CD4-positive, alpha-beta memory T cell (primary cell): ENCODE measurements at regions of chr2 and their contacts with region 1.

Region 1: DNA sequence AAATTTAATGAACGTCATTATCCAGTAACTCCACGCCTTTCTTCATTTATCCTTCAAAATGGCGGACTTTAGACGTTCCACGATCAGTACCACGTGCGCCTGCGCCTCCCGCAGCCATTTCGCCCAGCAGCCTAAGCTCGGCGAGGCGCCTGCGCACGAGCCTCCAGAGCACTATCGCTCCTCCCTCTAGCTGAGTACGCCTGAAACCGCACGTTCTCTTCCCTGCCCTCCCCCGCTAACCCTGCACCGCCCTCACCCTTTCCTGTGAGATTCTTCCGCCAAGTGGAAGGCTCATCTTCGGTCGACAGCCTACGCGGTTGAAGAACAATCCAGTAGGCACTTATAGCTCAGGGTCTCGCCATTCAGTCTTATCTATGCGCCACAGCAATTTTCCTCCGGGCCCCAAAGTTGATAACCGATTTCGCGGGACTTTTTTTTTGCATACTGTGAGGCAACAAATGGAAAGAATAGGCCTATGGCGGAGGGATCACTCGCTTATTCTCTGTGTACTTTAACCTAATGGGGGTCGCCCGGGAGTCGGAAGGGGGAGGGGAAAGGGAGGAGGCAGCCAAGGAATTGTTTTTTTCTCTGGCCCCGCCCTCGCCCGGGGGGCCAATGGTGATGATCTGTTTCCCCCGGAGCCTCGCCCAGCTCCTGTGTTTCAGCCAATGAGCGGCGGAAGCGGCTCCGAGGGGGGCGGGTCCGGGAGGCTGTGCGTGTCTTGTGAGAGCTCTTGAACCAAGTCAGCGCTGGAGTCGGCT is at the start of gene KDM3A:
- DNase-seq: peak; percentile 99 to 100 (median 99)
- H3K4me3 ChIP-seq: peak within 1 kb of the TSS; percentile 94 to 95
- H3K4me3 Mint-ChIP-seq: peak within 1 kb of the TSS; percentile 95 to 99 (median 98)
- H3K27ac ChIP-seq: peak within 1 kb of the TSS; percentile 83
- H3K27ac Mint-ChIP-seq: peak within 1 kb of the TSS; percentile 98 to 100 (median 99)
- H3K4me1 ChIP-seq: peaks cover 37% of the 10 kb centered on the region
- H3K4me1 Mint-ChIP-seq: peaks cover 37 to 51% (median 45%) of the 10 kb centered on the region in 4 donors
- H3K27me3 ChIP-seq: no peaks in the 10 kb centered on the region
- H3K27me3 Mint-ChIP-seq: peaks cover 2 to 9% of the 10 kb centered on the region in 2 donors
- total RNA-seq, gene KDM3A: 158 to 164 TPM

Region 2: GRCh38 chr2:85354286-85355072 is 1086.3 kb before region 1 on chr2 and contains the starts of genes ELMOD3 and RETSAT:
- CTCF ChIA-PET with region 1: no interaction called
- POLR2A ChIA-PET with region 1: interaction called, 3 read pairs
- intact Hi-C with region 1: loop called (anchors 5 kb)
- DNase-seq: peak; percentile 98 to 99 (median 99)
- H3K4me3 ChIP-seq: peak within 1 kb of the TSS; percentile 64 to 81
- H3K4me3 Mint-ChIP-seq: peak within 1 kb of the TSS; percentile 97 to 100 (median 99)
- H3K27ac ChIP-seq: peak within 1 kb of the TSS; percentile 94
- H3K27ac Mint-ChIP-seq: peak within 1 kb of the TSS; percentile 94 to 100 (median 99)
- H3K4me1 ChIP-seq: peaks cover 44% of the 10 kb centered on the region
- H3K4me1 Mint-ChIP-seq: peaks cover 28 to 74% (median 57%) of the 10 kb centered on the region in 4 donors
- H3K27me3 ChIP-seq: no peaks in the 10 kb centered on the region
- H3K27me3 Mint-ChIP-seq: no peaks in the 10 kb centered on the region
- total RNA-seq, gene ELMOD3: 29.8 to 33.2 TPM
- total RNA-seq, gene RETSAT: 33.0 to 33.4 TPM

Region 3: GRCh38 chr2:86105252-86105968 is 335.4 kb before region 1 on chr2 and contains the start of gene POLR1A:
- CTCF ChIA-PET with region 1: no interaction called
- POLR2A ChIA-PET with region 1: interaction called, 16 read pairs
- intact Hi-C with region 1: loop called (anchors 1 kb)
- DNase-seq: peak; percentile 88 to 91 (median 90)
- H3K4me3 ChIP-seq: peak within 1 kb of the TSS; percentile 73 to 83
- H3K4me3 Mint-ChIP-seq: peak within 1 kb of the TSS; percentile 88 to 96 (median 92)
- H3K27ac ChIP-seq: peak within 1 kb of the TSS; percentile 82
- H3K27ac Mint-ChIP-seq: peak within 1 kb of the TSS; percentile 93 to 100 (median 99)
- H3K4me1 ChIP-seq: peaks cover 34% of the 10 kb centered on the region
- H3K4me1 Mint-ChIP-seq: peaks cover 47 to 79% (median 61%) of the 10 kb centered on the region in 4 donors
- H3K27me3 ChIP-seq: no peaks in the 10 kb centered on the region
- H3K27me3 Mint-ChIP-seq: no peaks in the 10 kb centered on the region
- total RNA-seq, gene POLR1A: 23.4 to 25.8 TPM

Region 4: GRCh38 chr2:86135653-86136052 is 305.2 kb before region 1 on chr2:
- CTCF ChIA-PET with region 1: no interaction called
- POLR2A ChIA-PET with region 1: no interaction called
- intact Hi-C with region 1: no loop called
- DNase-seq: no peak
- H3K4me3 ChIP-seq: no peak overlapping the region
- H3K4me3 Mint-ChIP-seq: no peak overlapping the region
- H3K27ac ChIP-seq: no peak overlapping the region
- H3K27ac Mint-ChIP-seq: peak overlapping the region in 5 of 7 donors; percentile 4 to 55 (median 24)
- H3K4me1 ChIP-seq: no peaks in the 10 kb centered on the region
- H3K4me1 Mint-ChIP-seq: peaks cover 8 to 20% (median 12%) of the 10 kb centered on the region in 4 donors
- H3K27me3 ChIP-seq: no peaks in the 10 kb centered on the region
- H3K27me3 Mint-ChIP-seq: no peaks in the 10 kb centered on the region

Region 5: DNA sequence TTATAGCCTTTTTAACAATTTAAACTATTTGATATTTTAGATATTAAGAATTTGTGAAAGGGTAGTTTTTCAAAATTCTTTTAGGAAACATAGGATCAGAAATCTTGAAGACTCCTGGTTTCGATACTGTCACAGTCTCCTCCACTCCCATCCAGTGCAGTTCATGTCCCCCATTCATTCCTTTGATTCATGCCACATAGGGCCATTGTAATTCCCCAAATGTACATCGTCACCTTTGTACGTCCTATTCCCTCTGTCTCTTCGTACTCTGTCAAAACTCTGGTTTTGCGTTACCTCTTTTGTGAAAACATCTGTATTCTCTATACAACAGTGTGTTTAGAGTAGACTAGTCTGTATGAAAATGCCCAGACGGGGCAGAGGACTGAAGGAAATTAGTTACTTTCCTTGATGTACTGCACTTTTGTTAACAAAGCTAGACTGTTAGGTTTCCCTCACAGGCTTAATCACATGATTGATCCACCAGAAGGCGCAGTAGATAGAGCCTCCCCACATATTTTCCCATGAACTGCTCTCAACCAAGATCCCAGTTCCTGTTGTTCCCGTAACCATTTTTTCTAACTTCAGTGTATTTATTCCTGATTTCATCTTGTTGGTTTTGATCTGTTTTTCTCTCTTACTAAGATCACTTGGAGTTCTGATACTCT is 239.0 kb before region 1 on chr2:
- CTCF ChIA-PET with region 1: no interaction called
- POLR2A ChIA-PET with region 1: interaction called, 21 read pairs
- intact Hi-C with region 1: no loop called
- DNase-seq: no peak
- H3K4me3 ChIP-seq: no peak overlapping the region
- H3K4me3 Mint-ChIP-seq: peak overlapping the region in 5 of 8 donors; percentile 10 to 43 (median 22)
- H3K27ac ChIP-seq: no peak overlapping the region
- H3K27ac Mint-ChIP-seq: peak overlapping the region in 4 of 7 donors; percentile 51 to 70 (median 56)
- H3K4me1 ChIP-seq: peaks cover 24% of the 10 kb centered on the region
- H3K4me1 Mint-ChIP-seq: peaks cover 27 to 49% (median 38%) of the 10 kb centered on the region in 4 donors
- H3K27me3 ChIP-seq: no peaks in the 10 kb centered on the region
- H3K27me3 Mint-ChIP-seq: no peaks in the 10 kb centered on the region

Region 6: DNA sequence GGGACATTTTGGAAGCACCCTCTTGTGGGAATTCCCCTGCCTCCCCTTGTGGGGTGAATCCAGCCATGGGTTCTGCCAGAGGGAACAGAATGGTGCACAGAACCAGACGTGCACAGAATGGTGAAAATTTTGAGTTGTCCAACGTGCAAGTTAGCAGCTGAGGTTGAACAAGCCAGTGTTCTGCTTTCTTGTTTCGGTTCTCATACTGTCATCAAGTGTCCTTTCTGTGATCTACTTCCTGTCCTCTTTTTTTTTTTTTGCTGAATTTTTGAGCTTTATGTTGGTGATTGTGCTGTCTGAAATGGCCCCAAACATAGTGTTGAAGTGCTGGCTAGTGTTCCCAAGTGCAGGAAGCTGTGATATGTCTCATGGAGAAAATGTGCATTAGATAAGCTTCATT is 81.9 kb before region 1 on chr2:
- CTCF ChIA-PET with region 1: no interaction called
- POLR2A ChIA-PET with region 1: no interaction called
- intact Hi-C with region 1: no loop called
- DNase-seq: no peak
- H3K4me3 ChIP-seq: no peak overlapping the region
- H3K4me3 Mint-ChIP-seq: no peak overlapping the region
- H3K27ac ChIP-seq: no peak overlapping the region
- H3K27ac Mint-ChIP-seq: no peak overlapping the region
- H3K4me1 ChIP-seq: no peaks in the 10 kb centered on the region
- H3K4me1 Mint-ChIP-seq: no peaks in the 10 kb centered on the region
- H3K27me3 ChIP-seq: no peaks in the 10 kb centered on the region
- H3K27me3 Mint-ChIP-seq: peaks cover 5 to 9% of the 10 kb centered on the region in 2 donors

Region 7: DNA sequence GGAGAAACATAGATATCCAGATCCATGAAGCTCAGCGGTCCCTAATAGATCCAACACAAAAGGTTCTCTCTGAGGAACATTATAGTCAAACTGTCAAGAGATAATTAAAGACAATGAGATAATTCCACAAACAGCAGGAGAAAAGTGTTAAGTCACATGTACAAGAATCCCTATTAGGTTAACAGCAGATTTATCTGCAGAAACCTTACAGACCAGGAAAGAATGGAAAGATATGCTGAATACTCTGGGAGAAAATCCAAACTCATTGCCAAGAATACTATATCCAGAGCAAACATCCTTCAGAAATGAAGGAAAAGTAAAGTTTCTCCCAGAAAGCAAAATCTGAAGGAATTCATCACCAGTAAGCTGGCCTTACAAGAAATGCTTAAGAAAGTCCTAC is 10.4 kb before region 1 on chr2:
- CTCF ChIA-PET with region 1: interaction called, 5 read pairs
- POLR2A ChIA-PET with region 1: interaction called, 15 read pairs
- intact Hi-C with region 1: no loop called
- DNase-seq: no peak
- H3K4me3 ChIP-seq: no peak overlapping the region
- H3K4me3 Mint-ChIP-seq: no peak overlapping the region
- H3K27ac ChIP-seq: no peak overlapping the region
- H3K27ac Mint-ChIP-seq: no peak overlapping the region
- H3K4me1 ChIP-seq: no peaks in the 10 kb centered on the region
- H3K4me1 Mint-ChIP-seq: no peaks in the 10 kb centered on the region
- H3K27me3 ChIP-seq: no peaks in the 10 kb centered on the region
- H3K27me3 Mint-ChIP-seq: peaks cover 8 to 12% of the 10 kb centered on the region in 2 donors

Region 8: DNA sequence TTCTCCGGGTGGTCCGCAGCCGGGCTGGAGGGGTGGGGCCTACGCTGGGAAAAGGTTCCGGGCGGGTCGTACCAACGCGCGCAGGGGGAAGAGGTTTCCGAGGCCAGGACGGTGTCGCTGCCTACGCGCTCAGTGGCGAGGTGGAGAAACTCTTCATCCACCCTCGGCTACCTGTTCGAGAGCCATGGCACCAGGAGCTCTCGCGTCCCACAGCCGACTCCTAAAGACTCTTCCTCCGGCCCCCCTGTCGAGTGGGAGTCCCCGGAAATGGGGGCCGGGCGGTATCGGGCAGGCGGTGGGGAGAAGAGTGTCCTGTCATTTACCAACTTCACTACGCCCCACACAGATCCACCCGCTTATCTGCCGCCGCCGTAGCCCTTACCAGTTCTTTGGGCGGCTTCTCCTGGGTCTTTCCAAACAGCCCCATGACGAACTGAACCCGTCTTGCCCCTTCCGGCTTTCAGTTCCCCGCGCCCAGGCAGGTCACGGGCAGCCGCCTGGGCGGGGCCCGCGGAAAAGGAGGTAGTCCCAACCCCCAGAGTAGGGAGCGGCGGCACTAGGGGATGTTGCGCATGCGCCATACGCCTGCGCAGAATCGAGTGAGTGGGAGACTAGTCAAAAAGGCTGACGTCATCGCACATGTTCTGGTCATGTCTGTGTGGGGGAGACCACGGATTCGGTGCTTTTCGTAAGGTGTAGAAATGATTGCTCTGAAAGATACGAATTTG is 122.3 kb after region 1 on chr2 and contains the start of gene CHMP3:
- CTCF ChIA-PET with region 1: no interaction called
- POLR2A ChIA-PET with region 1: interaction called, 49 read pairs
- intact Hi-C with region 1: loop called (anchors 1 kb)
- DNase-seq: peak; percentile 97 to 98 (median 98)
- H3K4me3 ChIP-seq: peak within 1 kb of the TSS; percentile 85 to 91
- H3K4me3 Mint-ChIP-seq: peak within 1 kb of the TSS; percentile 95 to 98 (median 98)
- H3K27ac ChIP-seq: peak within 1 kb of the TSS; percentile 99
- H3K27ac Mint-ChIP-seq: peak within 1 kb of the TSS; percentile 94 to 99 (median 99)
- H3K4me1 ChIP-seq: peaks cover 42% of the 10 kb centered on the region
- H3K4me1 Mint-ChIP-seq: peaks cover 0 to 38% (median 31%) of the 10 kb centered on the region in 4 donors
- H3K27me3 ChIP-seq: no peaks in the 10 kb centered on the region
- H3K27me3 Mint-ChIP-seq: peaks cover 0 to 4% of the 10 kb centered on the region in 2 donors
- total RNA-seq, gene CHMP3: 83.3 to 83.6 TPM